ENCODE measurements at regions of chr4 and their contacts with region 1.

Region 1: GRCh38 chr4:53914313-53915016 is 149.9 kb downstream of the CHIC2 start:
- DNase-seq: no peak
- ATAC-seq: no peak

Region 2: DNA sequence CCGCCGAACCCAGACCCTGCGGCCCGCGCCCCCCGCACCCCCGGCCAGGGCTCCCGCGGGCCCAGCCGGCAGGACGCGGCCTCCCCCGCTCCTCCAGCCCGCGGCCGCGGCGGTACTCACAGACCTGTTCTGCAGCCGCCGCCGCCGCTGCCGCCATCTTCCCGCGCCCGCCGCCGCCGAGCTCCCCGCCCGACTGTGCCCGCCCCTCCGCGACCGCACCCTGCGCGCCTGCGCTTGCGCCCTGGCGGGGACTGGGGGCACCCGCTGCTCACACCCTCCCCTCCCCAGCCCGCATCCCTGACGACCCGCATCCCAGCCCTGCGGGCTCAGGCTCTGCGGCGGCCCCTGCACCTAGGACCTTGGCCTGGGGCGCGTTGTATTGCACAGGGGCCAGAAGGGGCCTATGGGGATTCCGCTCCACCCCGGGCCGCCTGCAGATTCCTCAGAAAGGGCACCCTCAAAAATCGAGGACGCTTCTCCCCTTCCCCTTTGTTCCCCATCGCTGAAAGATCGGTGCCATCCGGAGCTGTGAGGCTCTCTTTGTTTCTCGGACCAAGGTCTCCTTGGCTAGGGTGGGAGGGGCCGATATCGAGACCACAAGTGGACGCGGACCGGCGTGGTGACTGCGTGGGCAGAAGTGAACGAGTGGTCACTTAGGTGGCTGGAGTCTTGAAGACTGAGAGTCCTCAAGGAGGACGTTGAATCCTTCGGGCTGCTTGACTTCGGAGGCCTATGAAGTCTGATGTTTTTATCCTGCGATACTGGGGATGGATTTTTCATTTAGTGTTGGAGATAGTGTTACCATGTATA is 1876.2 kb before region 1 on chr4 and contains the start of gene SGCB:
- intact Hi-C with region 1: no loop called
- DNase-seq: peak; percentile 87
- ATAC-seq: peak; percentile 95
- total RNA-seq, gene SGCB: 80.4 TPM

Region 3: DNA sequence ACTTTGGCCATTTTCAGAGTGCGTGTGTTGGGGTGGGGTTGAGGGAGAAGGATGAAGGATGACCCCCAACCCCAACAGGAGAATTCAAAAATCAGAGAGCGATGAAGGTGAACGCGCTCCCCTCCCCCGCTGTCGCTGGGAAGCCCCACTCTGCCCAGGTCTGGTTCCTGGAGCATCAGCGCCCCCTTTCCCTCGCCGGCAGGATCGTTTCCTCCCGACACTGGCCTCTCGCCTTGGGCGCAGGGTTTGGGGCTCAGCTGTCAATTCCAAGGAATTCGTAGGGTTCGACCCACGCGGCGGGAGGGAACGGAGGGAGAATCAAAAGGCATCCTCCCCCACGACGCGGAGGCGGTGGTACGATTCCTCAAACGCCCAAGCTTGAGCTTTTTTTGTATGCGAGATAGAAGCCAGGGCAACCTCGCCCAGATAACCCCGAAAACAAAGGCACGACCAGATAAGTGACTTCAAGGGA is 313.6 kb after region 1 on chr4:
- intact Hi-C with region 1: loop called (anchors 10 kb)
- DNase-seq: peak; percentile 84
- ATAC-seq: peak; percentile 68

Measured in left ventricle myocardium superior (tissue), 1 donor.